GM10248 (cell line): ENCODE measurements at regions of chr1 and their contacts with region 1.

Region 1: DNA sequence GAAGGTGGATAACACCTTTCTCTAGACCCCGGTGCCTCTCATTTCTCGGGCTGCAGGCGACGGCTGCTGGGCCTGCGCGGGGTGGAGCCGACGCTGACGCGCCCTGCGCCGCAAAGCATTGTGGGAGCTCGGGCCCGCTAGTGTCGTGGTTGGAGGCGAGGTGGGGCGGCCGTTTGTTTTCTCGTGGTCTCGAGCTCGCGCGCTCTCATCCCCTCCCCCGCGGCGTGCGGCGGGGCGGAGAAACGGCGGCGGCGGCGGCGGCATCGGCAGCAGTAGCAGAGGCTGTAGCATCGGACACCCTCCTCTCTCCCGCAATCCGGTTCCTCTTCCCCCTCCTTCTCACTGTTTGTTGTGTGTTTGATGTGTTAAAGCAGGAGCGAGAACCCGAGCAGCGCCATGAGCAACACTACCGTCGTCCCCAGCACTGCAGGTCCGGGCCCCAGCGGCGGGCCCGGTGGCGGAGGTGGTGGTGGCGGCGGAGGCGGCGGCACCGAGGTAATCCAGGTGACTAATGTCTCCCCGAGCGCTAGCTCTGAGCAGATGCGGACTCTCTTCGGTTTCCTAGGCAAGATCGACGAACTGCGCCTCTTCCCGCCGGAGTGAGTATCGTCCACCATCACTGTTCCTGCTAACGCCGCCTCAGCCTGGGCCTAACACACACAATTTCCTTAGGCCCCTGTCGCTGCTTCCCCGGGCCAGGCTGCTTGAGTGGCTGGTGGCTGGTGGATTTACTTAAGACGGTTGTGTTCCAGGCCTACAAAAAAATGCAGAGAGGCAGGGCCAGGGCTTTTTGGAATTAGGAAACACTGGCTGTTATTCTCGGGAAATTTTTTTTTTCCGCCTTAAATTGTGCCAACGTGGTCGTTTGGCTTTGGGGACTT is at the start of gene SRSF11:
- DNase-seq: peak; percentile 93
- CTCF ChIP-seq: no peak

Region 2: GRCh38 chr1:70034403-70034802 is 187.1 kb before region 1 on chr1:
- CTCF ChIA-PET with region 1: no interaction called
- POLR2A ChIA-PET with region 1: no interaction called
- DNase-seq: no peak
- CTCF ChIP-seq: no peak

Region 3: DNA sequence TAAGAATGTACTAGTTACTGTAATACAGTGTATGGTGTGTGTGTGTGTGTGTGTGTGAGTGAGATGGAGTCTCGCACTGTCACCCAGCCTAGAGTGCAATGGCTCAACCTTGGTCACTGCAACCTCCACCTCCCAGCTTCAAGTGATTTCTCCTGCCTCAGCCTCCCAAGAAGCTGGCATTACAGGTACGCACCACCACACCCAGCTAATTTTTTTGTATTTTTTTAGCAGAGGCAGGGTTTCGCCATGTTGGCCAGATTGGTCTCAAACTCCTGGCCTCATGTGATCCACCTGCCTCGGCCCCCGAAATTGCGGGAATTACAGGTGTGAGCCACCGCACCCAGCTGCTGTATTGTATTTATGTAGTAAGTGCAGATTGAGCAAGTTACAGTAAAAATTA is 13.2 kb before region 1 on chr1:
- CTCF ChIA-PET with region 1: interaction called, 14 read pairs
- POLR2A ChIA-PET with region 1: interaction called, 5 read pairs
- DNase-seq: no peak
- CTCF ChIP-seq: no peak